Activated T-helper 2 cell treated with anti-CD3 and anti-CD28 coated beads, Interferon-gamma antibody, Interleukin-2, Interleukin-4, amounts not matched to agents 10 μg/mL and 5 μg/mL and 100 μg/mL, durations not matched to agents 14 hours and 24 hours and 36 hours (primary cell): ENCODE measurements at regions of chr21 and their contacts with region 1.

Region 1: DNA sequence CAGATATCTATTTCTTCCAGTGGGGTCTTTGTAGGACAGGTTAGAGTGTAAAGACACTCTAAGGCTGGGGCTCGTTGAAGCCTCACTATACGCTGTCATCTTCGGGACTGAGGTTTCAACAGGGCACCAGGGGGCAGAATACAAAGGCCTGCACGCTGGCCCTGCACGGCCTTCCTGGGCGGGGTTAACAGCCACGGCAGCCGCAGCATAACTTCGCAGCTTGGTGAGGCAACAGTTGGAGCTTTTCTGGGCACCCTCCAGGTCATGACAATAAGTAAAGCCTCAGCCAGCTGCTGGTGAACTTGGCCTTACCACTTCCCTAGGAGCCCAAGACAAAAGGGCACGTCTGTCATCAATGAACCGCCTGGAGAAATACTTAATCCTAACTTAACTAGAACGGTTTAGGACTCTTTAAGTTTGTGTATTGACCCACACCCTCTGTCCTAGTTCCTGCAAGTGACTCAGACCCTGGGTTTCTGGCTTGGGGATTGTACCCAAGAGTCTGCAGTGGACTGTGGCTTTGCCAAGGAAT is 2.3 kb upstream of the RUNX1 start:
- DNase-seq: peak; percentile 81
- H3K4me3 Mint-ChIP-seq: peak overlapping the region; percentile 49
- H3K27ac Mint-ChIP-seq: peak overlapping the region; percentile 96
- H3K4me1 Mint-ChIP-seq: peaks cover 47% of the 10 kb centered on the region
- H3K27me3 Mint-ChIP-seq: no peaks in the 10 kb centered on the region

Region 2: GRCh38 chr21:34745557-34746255 is 305.6 kb before region 1 on chr21:
- intact Hi-C with region 1: loop called (anchors 5 kb)
- DNase-seq: peak; percentile 46
- H3K4me3 Mint-ChIP-seq: peak overlapping the region; percentile 45
- H3K27ac Mint-ChIP-seq: no peak overlapping the region
- H3K4me1 Mint-ChIP-seq: peaks cover 8% of the 10 kb centered on the region
- H3K27me3 Mint-ChIP-seq: peaks cover 23% of the 10 kb centered on the region

Region 3: GRCh38 chr21:34933609-34934335 is 117.6 kb before region 1 on chr21:
- intact Hi-C with region 1: loop called (anchors 2 kb)
- DNase-seq: peak; percentile 37
- H3K4me3 Mint-ChIP-seq: peak overlapping the region; percentile 72
- H3K27ac Mint-ChIP-seq: peak overlapping the region; percentile 91
- H3K4me1 Mint-ChIP-seq: peaks cover 83% of the 10 kb centered on the region
- H3K27me3 Mint-ChIP-seq: no peaks in the 10 kb centered on the region

Region 4: GRCh38 chr21:35026617-35027562 is 24.5 kb before region 1 on chr21:
- intact Hi-C with region 1: loop called (anchors 1 kb)
- DNase-seq: peak; percentile 87
- H3K4me3 Mint-ChIP-seq: peak overlapping the region; percentile 90
- H3K27ac Mint-ChIP-seq: peak overlapping the region; percentile 100
- H3K4me1 Mint-ChIP-seq: peaks cover 86% of the 10 kb centered on the region
- H3K27me3 Mint-ChIP-seq: no peaks in the 10 kb centered on the region

Region 5: GRCh38 chr21:35138665-35139381 is 87.5 kb after region 1 on chr21:
- intact Hi-C with region 1: loop called (anchors 1 kb)
- DNase-seq: peak; percentile 10
- H3K4me3 Mint-ChIP-seq: peak overlapping the region; percentile 62
- H3K27ac Mint-ChIP-seq: peak overlapping the region; percentile 94
- H3K4me1 Mint-ChIP-seq: peaks cover 33% of the 10 kb centered on the region
- H3K27me3 Mint-ChIP-seq: no peaks in the 10 kb centered on the region

Region 6: DNA sequence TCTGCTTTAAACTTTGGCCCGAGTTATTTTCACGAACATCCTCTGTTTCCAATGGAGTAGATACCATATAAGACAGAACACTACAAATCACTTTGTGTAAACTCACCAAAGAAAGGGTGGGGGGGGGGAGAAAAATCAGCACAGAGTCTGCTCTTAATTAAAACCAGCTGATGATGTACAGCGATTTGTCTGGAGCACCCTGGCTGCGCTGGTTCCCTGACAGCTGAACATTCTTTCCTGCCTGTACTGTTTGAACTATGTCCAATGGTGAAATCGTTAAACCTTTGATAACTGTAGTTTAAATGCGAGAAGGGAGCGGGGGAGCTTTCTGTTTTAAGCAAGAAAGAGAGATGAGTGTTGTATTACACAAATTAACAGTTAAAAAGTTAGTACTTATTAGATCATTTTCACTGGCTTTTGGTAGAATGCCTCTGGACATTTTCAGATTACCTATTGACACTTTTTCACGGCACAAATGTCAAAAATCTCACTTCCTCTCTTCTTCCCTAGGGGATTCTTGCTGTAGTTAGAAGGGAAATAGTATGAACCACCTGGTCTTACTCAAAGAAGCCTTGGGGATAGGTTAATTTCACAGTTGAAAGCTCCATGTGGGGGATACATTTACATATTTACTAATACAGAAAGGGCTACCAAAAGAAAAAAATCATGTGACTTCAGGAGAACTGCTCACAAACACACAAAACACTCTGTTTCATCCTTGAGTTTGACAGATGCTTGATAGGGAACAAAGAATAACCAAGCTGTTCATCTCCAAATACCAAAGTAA is 137.9 kb after region 1 on chr21:
- intact Hi-C with region 1: no loop called
- DNase-seq: no peak
- H3K4me3 Mint-ChIP-seq: no peak overlapping the region
- H3K27ac Mint-ChIP-seq: no peak overlapping the region
- H3K4me1 Mint-ChIP-seq: peaks cover 15% of the 10 kb centered on the region
- H3K27me3 Mint-ChIP-seq: no peaks in the 10 kb centered on the region

Region 7: GRCh38 chr21:35342440-35342839 is 291.1 kb after region 1 on chr21:
- intact Hi-C with region 1: loop called (anchors 2 kb)
- DNase-seq: no peak
- H3K4me3 Mint-ChIP-seq: peak overlapping the region; percentile 69
- H3K27ac Mint-ChIP-seq: peak overlapping the region; percentile 98
- H3K4me1 Mint-ChIP-seq: peaks cover 63% of the 10 kb centered on the region
- H3K27me3 Mint-ChIP-seq: no peaks in the 10 kb centered on the region

Region 8: DNA sequence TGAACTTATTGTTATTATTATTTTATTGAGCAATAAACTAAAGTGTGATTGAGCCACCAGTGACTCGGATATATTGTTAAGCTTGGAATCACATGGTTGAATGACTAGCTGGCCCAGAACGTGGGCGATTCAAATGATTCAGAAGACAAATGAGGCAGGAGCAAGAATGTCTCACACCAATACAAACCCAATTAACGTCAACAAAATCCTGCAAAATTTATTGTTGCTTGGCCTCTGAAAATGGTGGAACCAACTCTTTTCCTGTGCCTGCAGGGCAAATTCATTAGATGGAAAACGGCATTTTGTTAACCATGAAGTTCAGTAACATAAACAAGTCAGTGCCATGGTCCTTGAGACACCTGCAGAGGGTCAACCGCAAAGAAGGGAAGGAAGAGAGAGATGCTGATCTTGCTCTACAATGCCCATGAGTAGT is 527.0 kb after region 1 on chr21:
- intact Hi-C with region 1: loop called (anchors 2 kb)
- DNase-seq: no peak
- H3K4me3 Mint-ChIP-seq: no peak overlapping the region
- H3K27ac Mint-ChIP-seq: peak overlapping the region; percentile 71
- H3K4me1 Mint-ChIP-seq: peaks cover 26% of the 10 kb centered on the region
- H3K27me3 Mint-ChIP-seq: peaks cover 5% of the 10 kb centered on the region